MCF 10A (cell line): ENCODE measurements at regions of chr17 and their contacts with region 1.

Region 1: GRCh38 chr17:14300575-14301278 is at the start of gene HS3ST3B1:
- DNase-seq: peak; percentile 99
- H3K4me3 Mint-ChIP-seq: peak within 1 kb of the TSS; percentile 90
- H3K27ac Mint-ChIP-seq: peak within 1 kb of the TSS; percentile 81
- H3K4me1 Mint-ChIP-seq: peaks cover 13% of the 10 kb centered on the region
- H3K27me3 Mint-ChIP-seq: peaks cover 12% of the 10 kb centered on the region
- CTCF ChIP-seq: no peak
- total RNA-seq, gene HS3ST3B1: 3.4 and 3.8 TPM in 2 replicates

Region 2: DNA sequence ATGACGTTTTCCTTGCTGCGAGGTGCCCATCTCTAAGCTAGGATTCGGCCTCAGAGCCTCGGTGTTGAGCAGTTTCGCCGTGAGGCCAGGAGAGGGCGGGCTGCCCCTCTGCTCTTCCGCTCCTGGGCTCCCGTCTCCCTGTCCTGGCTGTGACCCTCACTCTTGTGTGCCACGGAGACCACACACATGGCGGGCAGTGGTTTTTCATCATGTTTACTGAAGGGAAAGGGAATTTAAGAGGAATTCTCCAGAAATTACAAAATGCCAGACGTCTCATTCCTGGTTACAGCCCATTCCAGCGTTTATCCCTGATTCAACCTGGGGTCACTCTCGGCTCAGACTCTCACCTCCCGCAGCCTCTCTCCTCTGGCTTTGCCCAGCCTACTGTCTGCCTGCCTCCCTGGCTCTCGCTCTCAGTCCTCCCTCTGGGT is 1186.1 kb before region 1 on chr17:
- CTCF ChIA-PET with region 1: interaction called, 3 read pairs
- POLR2A ChIA-PET with region 1: no interaction called
- intact Hi-C with region 1: loop called (anchors 10 kb)
- DNase-seq: peak; percentile 55
- H3K4me3 Mint-ChIP-seq: no peak overlapping the region
- H3K27ac Mint-ChIP-seq: no peak overlapping the region
- H3K4me1 Mint-ChIP-seq: no peaks in the 10 kb centered on the region
- H3K27me3 Mint-ChIP-seq: peaks cover 64% of the 10 kb centered on the region
- CTCF ChIP-seq: peak; percentile 80

Region 3: DNA sequence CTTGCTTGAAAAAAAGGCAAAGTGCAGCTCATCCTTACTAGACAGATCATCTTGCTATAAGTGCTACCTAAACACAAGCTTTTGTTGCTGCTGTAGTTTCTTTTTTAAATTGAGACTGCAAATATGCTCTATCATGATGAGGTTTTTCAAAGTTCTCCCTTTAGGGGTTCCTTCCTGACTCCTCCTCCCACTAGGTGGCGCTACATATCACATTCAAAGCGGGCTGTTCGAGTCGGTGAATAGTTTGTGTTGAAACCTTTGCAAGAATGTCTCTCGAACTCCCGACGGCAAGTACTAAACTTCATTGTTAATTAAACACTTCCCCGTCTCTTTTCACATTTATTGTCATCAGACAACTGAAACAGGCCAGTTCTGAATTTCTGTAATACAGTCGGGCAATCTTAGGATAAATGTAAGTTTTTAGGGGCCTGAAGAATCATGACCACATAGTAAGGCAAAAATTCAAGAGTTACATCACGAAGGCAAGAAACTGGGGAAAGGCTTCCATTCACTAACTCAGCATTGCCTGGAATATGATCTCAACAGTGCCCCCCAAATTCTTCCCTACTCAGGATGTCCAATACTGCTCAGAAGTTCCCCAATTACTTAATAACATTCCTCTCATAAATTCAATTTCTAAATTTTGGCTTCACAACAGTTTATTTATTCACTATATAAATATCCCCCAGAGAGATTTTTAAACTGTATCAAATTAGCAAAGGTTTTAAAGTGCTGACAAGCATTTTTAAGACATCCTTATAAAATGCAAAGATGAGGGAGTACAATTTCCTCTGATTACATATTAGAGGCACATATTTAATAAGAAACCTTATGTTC is 705.7 kb before region 1 on chr17:
- CTCF ChIA-PET with region 1: interaction called, 50 read pairs
- POLR2A ChIA-PET with region 1: interaction called, 57 read pairs
- intact Hi-C with region 1: loop called (anchors 1 kb)
- DNase-seq: peak; percentile 94
- H3K4me3 Mint-ChIP-seq: peak overlapping the region; percentile 51
- H3K27ac Mint-ChIP-seq: peak overlapping the region; percentile 71
- H3K4me1 Mint-ChIP-seq: peaks cover 44% of the 10 kb centered on the region
- H3K27me3 Mint-ChIP-seq: no peaks in the 10 kb centered on the region
- CTCF ChIP-seq: peak; percentile 86

Region 4: GRCh38 chr17:13776027-13776588 is 524.6 kb before region 1 on chr17:
- CTCF ChIA-PET with region 1: no interaction called
- POLR2A ChIA-PET with region 1: interaction called, 10 read pairs
- intact Hi-C with region 1: no loop called
- DNase-seq: peak; percentile 78
- H3K4me3 Mint-ChIP-seq: peak overlapping the region; percentile 22
- H3K27ac Mint-ChIP-seq: peak overlapping the region; percentile 80
- H3K4me1 Mint-ChIP-seq: peaks cover 25% of the 10 kb centered on the region
- H3K27me3 Mint-ChIP-seq: no peaks in the 10 kb centered on the region
- CTCF ChIP-seq: no peak

Region 5: GRCh38 chr17:14061666-14062560 is 238.8 kb before region 1 on chr17:
- CTCF ChIA-PET with region 1: interaction called, 10 read pairs
- POLR2A ChIA-PET with region 1: interaction called, 20 read pairs
- intact Hi-C with region 1: no loop called
- DNase-seq: peak; percentile 86
- H3K4me3 Mint-ChIP-seq: peak overlapping the region; percentile 45
- H3K27ac Mint-ChIP-seq: peak overlapping the region; percentile 47
- H3K4me1 Mint-ChIP-seq: peaks cover 16% of the 10 kb centered on the region
- H3K27me3 Mint-ChIP-seq: no peaks in the 10 kb centered on the region
- CTCF ChIP-seq: no peak

Region 6: GRCh38 chr17:14737984-14738659 is 437.4 kb after region 1 on chr17:
- CTCF ChIA-PET with region 1: no interaction called
- POLR2A ChIA-PET with region 1: no interaction called
- intact Hi-C with region 1: loop called (anchors 5 kb)
- DNase-seq: peak; percentile 100
- H3K4me3 Mint-ChIP-seq: peak overlapping the region; percentile 54
- H3K27ac Mint-ChIP-seq: peak overlapping the region; percentile 85
- H3K4me1 Mint-ChIP-seq: peaks cover 30% of the 10 kb centered on the region
- H3K27me3 Mint-ChIP-seq: no peaks in the 10 kb centered on the region
- CTCF ChIP-seq: peak; percentile 36